Activated T-helper 2 cell treated with anti-CD3 and anti-CD28 coated beads, Interferon-gamma antibody, Interleukin-2, Interleukin-4, amounts not matched to agents 10 μg/mL and 5 μg/mL and 100 μg/mL, durations not matched to agents 14 hours and 24 hours and 36 hours (primary cell): ENCODE measurements at regions of chr11 and their contacts with region 1.

Region 1: GRCh38 chr11:117946842-117947526 is 17.8 kb upstream of the TMPRSS13 start:
- DNase-seq: peak; percentile 74
- H3K4me3 Mint-ChIP-seq: no peak overlapping the region
- H3K27ac Mint-ChIP-seq: peak overlapping the region; percentile 60
- H3K4me1 Mint-ChIP-seq: peaks cover 78% of the 10 kb centered on the region
- H3K27me3 Mint-ChIP-seq: no peaks in the 10 kb centered on the region

Region 2: GRCh38 chr11:117817368-117818040 is 129.5 kb before region 1 on chr11:
- intact Hi-C with region 1: loop called (anchors 2 kb)
- DNase-seq: peak; percentile 78
- H3K4me3 Mint-ChIP-seq: peak overlapping the region; percentile 55
- H3K27ac Mint-ChIP-seq: peak overlapping the region; percentile 96
- H3K4me1 Mint-ChIP-seq: peaks cover 56% of the 10 kb centered on the region
- H3K27me3 Mint-ChIP-seq: no peaks in the 10 kb centered on the region

Region 3: GRCh38 chr11:117907251-117907981 is 39.6 kb before region 1 on chr11:
- intact Hi-C with region 1: loop called (anchors 5 kb)
- DNase-seq: peak; percentile 79
- H3K4me3 Mint-ChIP-seq: peak overlapping the region; percentile 71
- H3K27ac Mint-ChIP-seq: peak overlapping the region; percentile 88
- H3K4me1 Mint-ChIP-seq: peaks cover 23% of the 10 kb centered on the region
- H3K27me3 Mint-ChIP-seq: no peaks in the 10 kb centered on the region

Region 4: DNA sequence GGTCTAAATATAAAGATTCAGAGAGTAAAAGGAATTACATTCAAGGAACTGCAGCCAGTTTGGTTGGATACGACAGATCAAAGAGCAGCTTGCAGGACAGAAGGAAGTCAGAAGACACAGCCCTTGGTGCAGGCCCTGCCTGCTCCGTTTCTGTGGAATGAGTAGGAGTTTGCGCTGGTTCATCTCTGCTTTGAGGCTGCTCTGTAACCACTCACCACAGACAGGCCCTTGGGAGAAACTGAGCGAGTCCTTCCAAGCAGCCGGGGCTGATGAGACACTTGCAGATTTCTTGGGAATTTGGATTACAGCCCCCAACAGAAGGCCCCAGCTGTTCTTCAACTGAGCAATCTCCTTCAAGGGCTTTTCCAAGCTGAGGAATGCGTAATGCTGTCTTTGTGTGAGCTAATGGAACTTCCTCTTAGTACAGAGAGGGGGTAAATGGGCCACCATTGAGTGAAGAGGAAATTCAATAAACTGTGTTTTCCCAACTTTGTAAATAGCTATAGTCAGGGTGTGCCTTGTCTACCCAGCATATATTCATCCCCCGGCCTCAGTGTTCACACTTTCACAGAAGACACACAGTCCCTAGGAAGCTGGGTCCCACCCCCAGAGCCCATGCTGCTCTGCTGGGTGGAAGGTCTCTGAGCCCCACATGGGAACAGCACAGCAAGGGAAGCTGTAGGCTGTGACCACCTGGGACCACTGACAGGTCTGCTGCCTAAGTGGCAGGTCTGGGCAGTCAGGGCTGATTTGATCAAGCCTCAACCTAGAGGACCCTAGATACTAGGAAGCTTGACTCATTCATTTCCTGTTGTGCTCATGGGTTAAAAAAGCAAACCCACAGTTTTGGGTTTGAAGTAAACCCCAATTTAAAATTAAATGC is 55.8 kb after region 1 on chr11:
- intact Hi-C with region 1: loop called (anchors 1 kb)
- DNase-seq: peak; percentile 61
- H3K4me3 Mint-ChIP-seq: peak overlapping the region; percentile 54
- H3K27ac Mint-ChIP-seq: peak overlapping the region; percentile 99
- H3K4me1 Mint-ChIP-seq: peaks cover 85% of the 10 kb centered on the region
- H3K27me3 Mint-ChIP-seq: no peaks in the 10 kb centered on the region

Region 5: DNA sequence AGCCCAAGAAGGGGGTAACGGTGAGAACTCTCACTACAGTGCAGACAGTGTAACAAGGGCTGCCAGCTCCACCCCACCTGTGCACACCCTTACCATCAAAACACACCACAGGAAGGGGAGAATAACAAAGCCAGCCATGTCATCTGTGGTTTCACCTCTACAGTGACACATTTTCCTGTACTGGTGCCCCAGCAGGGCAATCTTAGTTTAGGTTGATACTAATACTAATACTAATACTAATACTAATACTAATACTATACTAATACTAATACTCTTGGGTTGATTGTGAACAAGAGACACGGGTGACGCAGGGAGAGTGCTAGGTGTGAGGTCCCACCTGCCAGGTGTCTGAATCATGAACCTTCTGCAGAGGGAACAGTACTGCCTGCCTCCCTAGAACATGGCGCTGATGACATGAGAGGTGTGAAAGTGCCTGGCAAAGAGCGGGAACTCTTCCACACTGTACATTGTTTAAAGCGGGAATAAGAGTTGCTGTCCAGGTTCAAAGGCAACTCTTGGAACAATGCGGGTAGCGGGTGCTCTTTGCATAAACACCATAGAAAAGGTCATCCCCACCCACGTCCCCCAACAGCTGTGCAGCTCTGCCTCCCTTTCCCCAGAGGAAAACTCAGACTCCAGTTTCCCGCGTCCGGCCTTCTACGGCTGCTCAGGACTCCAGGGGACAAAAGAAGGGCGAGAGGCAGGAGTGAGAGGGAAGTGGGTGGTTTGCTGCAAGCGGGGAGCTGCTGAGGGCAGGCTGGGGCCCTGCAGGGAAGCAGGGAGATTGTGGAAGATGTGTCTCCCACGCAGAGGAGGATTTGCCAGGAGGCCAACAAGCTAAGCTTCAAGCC is 104.9 kb after region 1 on chr11:
- intact Hi-C with region 1: loop called (anchors 1 kb)
- DNase-seq: peak; percentile 65
- H3K4me3 Mint-ChIP-seq: peak overlapping the region; percentile 5
- H3K27ac Mint-ChIP-seq: peak overlapping the region; percentile 94
- H3K4me1 Mint-ChIP-seq: peaks cover 54% of the 10 kb centered on the region
- H3K27me3 Mint-ChIP-seq: no peaks in the 10 kb centered on the region